ENCODE measurements at regions of chr10 and their contacts with region 1.

Region 1: DNA sequence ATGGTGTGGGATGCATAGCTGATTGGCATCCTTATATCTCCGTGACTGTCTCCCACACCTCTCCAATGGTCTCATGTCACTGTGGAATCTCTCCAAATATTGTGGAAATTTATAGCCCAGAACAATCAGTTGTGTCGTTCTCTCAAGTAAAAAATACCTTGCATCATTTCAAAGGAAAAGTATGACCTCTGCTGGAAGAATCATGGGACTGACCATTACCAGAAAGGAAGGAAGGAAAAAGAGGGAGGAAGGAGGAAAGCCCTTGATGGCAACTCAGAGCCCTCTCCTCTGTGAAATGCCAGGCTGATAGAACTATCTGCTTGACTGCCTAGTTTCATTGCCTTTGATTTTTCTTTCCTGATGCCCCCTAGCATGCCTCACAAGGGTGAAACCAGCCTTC is 76.3 kb downstream of the FOXI2 start:
- DNase-seq: peak; percentile 29 to 51 (median 38)
- H3K4me3 ChIP-seq: no peak overlapping the region
- H3K27ac ChIP-seq: no peak overlapping the region
- H3K4me1 ChIP-seq: no peaks in the 10 kb centered on the region
- H3K27me3 ChIP-seq: peaks cover 0 to 2% (median 0%) of the 10 kb centered on the region in 5 experiments

Region 2: GRCh38 chr10:127715782-127716378 is 97.4 kb before region 1 on chr10:
- CTCF ChIA-PET with region 1: interaction called, 53 read pairs
- POLR2A ChIA-PET with region 1: no interaction called
- DNase-seq: peak; percentile 55 to 64 (median 56)
- H3K4me3 ChIP-seq: no peak overlapping the region
- H3K27ac ChIP-seq: no peak overlapping the region
- H3K4me1 ChIP-seq: no peaks in the 10 kb centered on the region
- H3K27me3 ChIP-seq: no peaks in the 10 kb centered on the region

Region 3: GRCh38 chr10:127755753-127756152 is 57.5 kb before region 1 on chr10:
- CTCF ChIA-PET with region 1: interaction called, 17 read pairs
- POLR2A ChIA-PET with region 1: no interaction called
- DNase-seq: peak; percentile 31 to 57 (median 54)
- H3K4me3 ChIP-seq: no peak overlapping the region
- H3K27ac ChIP-seq: no peak overlapping the region
- H3K4me1 ChIP-seq: peaks cover 0 to 4% (median 0%) of the 10 kb centered on the region in 4 experiments
- H3K27me3 ChIP-seq: peaks cover 0 to 5% (median 0%) of the 10 kb centered on the region in 5 experiments

Region 4: DNA sequence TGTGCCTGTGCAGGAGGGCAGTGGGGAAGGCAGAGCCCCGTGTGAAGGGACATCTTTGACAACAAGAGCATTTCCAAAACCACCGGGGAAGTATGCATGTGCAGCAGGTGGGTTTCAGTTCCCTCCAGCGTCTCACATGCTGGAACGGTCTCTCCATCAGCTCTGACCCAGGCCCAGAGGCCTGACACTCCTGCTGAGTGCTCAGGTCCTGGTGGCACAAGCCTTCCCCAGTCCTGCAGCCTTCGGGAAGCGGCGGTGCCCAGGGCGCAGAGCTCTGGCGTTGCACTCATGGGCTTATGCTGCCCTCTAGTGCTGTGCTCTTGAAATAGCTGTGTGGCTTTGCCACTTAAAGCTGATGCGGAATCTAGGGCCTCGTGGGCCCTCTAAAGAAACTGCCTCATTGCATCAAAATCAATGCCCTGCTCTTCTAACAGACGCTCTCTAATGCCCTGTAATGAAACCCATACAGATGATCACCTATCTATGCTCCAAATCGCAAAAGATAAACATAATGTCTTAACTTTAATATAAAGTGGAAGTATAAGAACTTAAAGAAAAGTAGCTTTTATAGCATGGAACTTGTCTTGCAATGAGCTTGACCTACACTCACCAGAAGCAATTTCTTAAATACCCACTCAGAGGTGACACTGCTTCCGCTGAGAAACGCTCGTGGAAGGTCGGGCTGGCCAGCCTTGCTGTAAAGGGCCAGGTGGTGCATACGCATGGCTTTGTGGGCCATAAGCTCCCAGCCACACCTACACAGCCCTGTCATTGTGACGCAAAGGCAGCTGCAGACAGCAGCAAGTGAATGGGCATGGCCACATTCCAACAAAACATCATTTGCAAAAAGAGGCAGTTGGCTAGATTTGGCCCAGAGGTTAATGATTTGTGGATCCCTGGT is 40.8 kb after region 1 on chr10:
- CTCF ChIA-PET with region 1: interaction called, 25 read pairs
- POLR2A ChIA-PET with region 1: no interaction called
- DNase-seq: peak; percentile 49 to 73 (median 61)
- H3K4me3 ChIP-seq: peak overlapping the region in 2 of 7 experiments; percentile 42 to 51
- H3K27ac ChIP-seq: no peak overlapping the region
- H3K4me1 ChIP-seq: peaks cover 0 to 4% (median 1%) of the 10 kb centered on the region in 4 experiments
- H3K27me3 ChIP-seq: peaks cover 0 to 4% (median 0%) of the 10 kb centered on the region in 5 experiments